Transverse colon (tissue), 4 donors: ENCODE measurements at regions of chr18 and their contacts with region 1.

Region 1: GRCh38 chr18:24987303-24988252 is 364.4 kb downstream of the ZNF521 start:
- DNase-seq: no peak
- H3K4me3 ChIP-seq: no peak overlapping the region
- H3K27ac ChIP-seq: no peak overlapping the region
- H3K4me1 ChIP-seq: peaks cover 0 to 12% (median 0%) of the 10 kb centered on the region in 4 donors
- H3K27me3 ChIP-seq: no peaks in the 10 kb centered on the region
- CTCF ChIP-seq: no peak
- EP300 ChIP-seq: no peak
- POLR2A ChIP-seq: no peak

Region 2: DNA sequence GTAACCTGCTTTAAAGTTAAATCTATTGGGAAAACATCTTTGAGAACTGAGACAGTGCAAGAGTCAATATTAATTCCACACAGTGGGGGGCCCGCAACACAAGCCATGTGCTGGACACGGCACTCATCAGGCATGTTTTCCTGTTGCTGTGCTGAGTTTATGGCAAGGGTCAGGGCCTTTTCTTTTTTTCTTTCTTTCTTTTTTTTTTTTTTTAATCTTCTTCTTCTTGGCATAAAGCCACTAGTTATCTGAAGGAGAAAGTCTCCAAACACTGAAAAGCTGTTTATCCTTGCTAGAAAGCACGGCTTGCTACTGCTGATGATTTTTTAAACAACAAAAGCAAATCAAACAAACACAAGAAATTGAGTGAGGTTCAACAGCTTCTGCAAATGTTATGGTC is 112.3 kb after region 1 on chr18:
- in situ Hi-C with region 1: loop called in 1 of 4 experiments (anchors 25 kb)
- intact Hi-C with region 1: no loop called
- DNase-seq: no peak
- H3K4me3 ChIP-seq: no peak overlapping the region
- H3K27ac ChIP-seq: no peak overlapping the region
- H3K4me1 ChIP-seq: peaks cover 0 to 10% (median 2%) of the 10 kb centered on the region in 4 donors
- H3K27me3 ChIP-seq: no peaks in the 10 kb centered on the region
- CTCF ChIP-seq: no peak
- EP300 ChIP-seq: no peak
- POLR2A ChIP-seq: no peak